ENCODE measurements at regions of chr15 and their contacts with region 1.

Region 1: DNA sequence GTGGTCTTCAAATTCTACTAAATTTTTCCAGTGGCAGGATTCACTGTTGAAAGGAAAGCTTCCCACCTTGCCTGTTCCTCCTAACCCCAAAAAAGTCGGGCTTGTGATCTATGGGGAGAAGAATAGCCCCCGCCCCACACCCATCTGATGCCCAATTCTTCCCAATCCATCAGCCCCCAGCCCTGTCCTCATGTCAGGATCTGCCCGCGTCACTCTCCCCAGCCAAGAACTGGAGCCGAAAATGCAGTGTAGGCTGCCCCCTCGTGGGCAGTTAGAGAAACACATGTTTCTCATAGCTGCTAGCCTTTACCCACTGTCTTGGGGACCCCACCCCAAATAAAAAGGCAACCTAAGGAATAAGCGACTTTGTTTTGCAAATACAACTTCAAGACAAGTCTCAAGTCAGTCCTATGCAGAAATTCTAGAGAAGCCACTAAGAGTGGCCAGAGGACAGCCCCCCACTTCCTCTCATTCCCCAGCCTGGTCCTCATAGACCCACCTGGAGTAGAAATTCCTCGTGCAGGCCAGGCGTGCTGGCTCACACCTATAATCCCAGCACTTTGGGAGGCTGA is 13.0 kb upstream of the CSK start:
- DNase-seq: peak; percentile 80
- H3K4me3 Mint-ChIP-seq: no peak overlapping the region
- H3K27ac Mint-ChIP-seq: no peak overlapping the region
- H3K4me1 Mint-ChIP-seq: peaks cover 21% of the 10 kb centered on the region
- H3K27me3 Mint-ChIP-seq: peaks cover 5% of the 10 kb centered on the region

Region 2: DNA sequence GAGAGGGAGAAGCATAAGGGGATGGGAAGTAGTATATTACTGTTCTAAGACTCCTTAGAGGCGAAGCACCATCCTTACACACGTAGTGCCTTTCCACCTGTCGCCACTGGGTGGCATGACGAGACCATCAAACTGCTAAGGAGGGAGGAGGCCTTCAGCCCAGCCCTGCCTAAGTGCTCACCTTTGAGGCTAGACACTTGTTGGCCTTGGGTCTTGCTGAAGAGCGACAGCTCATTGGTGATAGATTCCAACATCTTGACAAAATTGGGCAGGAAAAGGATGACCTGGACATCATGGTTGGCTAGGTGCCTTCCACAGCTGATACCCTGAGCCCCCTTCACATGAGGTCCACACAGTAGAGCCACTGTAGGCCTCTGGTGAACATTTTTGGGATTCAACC is 133.6 kb before region 1 on chr15:
- CTCF ChIA-PET with region 1: interaction called, 434 read pairs
- POLR2A ChIA-PET with region 1: no interaction called
- intact Hi-C with region 1: loop called (anchors 1 kb)
- DNase-seq: peak; percentile 84
- H3K4me3 Mint-ChIP-seq: no peak overlapping the region
- H3K27ac Mint-ChIP-seq: no peak overlapping the region
- H3K4me1 Mint-ChIP-seq: no peaks in the 10 kb centered on the region
- H3K27me3 Mint-ChIP-seq: no peaks in the 10 kb centered on the region

Region 3: GRCh38 chr15:74754593-74755215 is 14.2 kb before region 1 on chr15:
- CTCF ChIA-PET with region 1: interaction called, 35 read pairs
- POLR2A ChIA-PET with region 1: no interaction called
- intact Hi-C with region 1: no loop called
- DNase-seq: no peak
- H3K4me3 Mint-ChIP-seq: no peak overlapping the region
- H3K27ac Mint-ChIP-seq: no peak overlapping the region
- H3K4me1 Mint-ChIP-seq: no peaks in the 10 kb centered on the region
- H3K27me3 Mint-ChIP-seq: peaks cover 2% of the 10 kb centered on the region

Region 4: DNA sequence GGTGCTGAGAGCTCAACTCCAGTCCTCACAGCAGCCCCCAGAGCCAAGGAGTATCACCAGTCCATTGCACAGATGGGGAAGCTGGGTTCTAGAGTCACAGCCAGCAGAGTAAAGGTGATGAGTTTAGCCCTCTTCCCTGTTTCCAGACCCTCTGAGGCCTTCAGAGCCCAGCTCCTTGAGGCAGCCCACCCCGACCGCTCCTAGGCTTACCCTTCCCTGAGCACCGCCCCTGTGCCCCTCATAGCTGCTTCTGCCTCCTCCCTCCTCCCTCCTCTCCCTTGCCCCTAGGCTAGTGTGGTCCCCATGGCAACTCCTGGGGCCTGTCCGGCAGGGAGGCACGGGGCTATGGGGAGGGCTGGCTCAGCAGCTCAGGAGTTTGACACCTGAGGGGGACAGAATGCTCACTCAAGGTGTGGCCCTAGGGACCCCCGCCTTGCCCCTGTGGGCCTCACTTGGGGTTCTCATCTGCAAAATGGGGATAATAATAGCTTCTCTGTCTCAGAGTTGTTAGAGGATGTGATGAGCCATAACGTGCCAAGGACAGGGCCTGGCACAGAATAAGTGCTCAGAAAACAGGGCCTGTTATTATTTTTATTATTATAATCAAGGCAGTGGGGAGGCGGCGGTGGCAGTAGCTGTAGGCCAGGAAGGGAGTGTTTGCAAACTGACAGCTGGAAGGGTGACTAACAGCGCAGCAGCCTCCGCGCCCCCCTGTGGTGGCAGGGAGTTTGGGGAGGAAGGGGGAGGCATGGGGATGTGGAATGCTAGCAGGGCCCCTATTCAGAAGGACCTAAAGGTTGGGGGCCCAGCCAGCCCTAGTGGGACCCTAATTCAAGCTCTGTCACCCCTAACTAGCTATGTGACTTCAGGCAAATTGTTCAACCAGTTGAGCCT is 24.5 kb after region 1 on chr15:
- CTCF ChIA-PET with region 1: interaction called, 1,220 read pairs
- POLR2A ChIA-PET with region 1: interaction called, 13 read pairs
- intact Hi-C with region 1: no loop called
- DNase-seq: peak; percentile 81
- H3K4me3 Mint-ChIP-seq: peak overlapping the region; percentile 29
- H3K27ac Mint-ChIP-seq: peak overlapping the region; percentile 99
- H3K4me1 Mint-ChIP-seq: peaks cover 88% of the 10 kb centered on the region
- H3K27me3 Mint-ChIP-seq: no peaks in the 10 kb centered on the region

Region 5: DNA sequence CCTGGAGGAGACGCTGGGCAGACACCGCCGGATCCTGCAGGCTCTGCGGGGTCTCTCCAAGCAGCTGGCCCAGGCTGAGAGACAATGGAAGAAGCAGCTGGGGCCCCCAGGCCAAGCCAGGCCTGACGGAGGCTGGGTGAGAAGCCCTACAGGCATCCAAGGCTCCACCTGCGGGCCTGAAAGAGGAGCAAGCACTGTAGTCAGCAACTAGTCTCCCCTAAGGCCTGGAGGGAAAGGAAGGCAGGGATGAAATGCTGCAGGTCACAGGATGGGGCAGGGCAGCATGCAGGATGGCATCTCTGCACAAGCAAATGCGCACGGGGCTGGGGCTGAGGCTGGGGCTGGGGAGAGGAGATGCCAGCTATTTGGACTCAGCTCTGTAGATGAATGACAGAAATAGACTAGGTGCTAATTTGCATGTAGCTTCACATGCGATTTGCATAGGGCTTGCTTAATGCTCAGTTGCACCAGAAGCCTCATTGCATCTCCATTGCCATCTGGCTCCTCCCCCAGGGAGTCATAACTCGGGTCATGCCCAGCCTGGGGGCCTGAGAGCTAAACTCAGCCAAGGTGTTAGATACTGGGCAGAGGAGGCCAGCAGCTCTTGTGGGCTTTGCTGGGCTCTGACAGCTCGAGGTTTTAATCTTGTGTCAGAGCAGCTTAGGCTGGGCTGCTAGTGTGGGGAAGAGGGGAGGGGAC is 52.4 kb after region 1 on chr15:
- CTCF ChIA-PET with region 1: interaction called, 14 read pairs
- POLR2A ChIA-PET with region 1: no interaction called
- intact Hi-C with region 1: no loop called
- DNase-seq: no peak
- H3K4me3 Mint-ChIP-seq: no peak overlapping the region
- H3K27ac Mint-ChIP-seq: no peak overlapping the region
- H3K4me1 Mint-ChIP-seq: peaks cover 7% of the 10 kb centered on the region
- H3K27me3 Mint-ChIP-seq: no peaks in the 10 kb centered on the region

Region 6: DNA sequence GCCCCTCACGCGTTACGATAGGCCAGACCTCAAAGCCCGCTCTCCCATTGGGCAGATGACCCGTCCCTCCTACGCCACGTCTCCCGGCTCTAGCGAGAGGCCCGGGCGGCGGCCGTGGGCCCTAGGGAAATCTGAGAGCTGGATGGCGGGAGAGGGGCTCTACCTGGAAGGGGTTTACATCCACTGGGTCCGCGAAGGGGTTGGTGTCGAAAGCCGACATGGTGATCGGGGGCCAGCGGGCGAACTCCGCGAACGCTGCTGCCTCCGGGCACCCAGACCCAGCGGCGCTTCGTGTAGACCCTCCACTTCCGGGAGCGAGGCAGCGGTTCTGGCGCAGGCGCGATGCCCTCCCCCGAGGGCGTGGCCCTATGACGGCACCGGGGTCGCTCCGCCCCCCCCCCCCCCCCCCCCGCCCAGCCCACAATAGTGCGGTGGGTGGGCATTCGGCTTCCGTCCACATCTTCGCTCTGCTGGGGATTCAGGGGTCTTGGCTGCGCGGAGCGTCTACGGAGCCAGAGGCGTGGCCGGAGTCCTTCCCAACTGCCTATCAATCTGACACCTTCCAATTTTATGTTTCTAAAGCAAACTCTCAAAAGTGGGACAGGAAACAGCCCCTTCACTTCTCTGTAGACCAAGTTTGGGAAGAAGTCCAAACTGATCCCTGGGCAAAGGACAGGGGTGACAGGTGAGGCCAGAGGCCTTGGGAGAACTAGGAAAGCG is 104.3 kb after region 1 on chr15 and contains the start of gene SCAMP2:
- CTCF ChIA-PET with region 1: interaction called, 20 read pairs
- POLR2A ChIA-PET with region 1: no interaction called
- intact Hi-C with region 1: no loop called
- DNase-seq: peak; percentile 93
- H3K4me3 Mint-ChIP-seq: peak within 1 kb of the TSS; percentile 96
- H3K27ac Mint-ChIP-seq: peak within 1 kb of the TSS; percentile 90
- H3K4me1 Mint-ChIP-seq: peaks cover 45% of the 10 kb centered on the region
- H3K27me3 Mint-ChIP-seq: no peaks in the 10 kb centered on the region
- total RNA-seq, gene SCAMP2: 77.6 to 79.5 TPM

Region 7: GRCh38 chr15:75008629-75009326 is 239.9 kb after region 1 on chr15:
- CTCF ChIA-PET with region 1: no interaction called
- POLR2A ChIA-PET with region 1: no interaction called
- intact Hi-C with region 1: no loop called
- DNase-seq: no peak
- H3K4me3 Mint-ChIP-seq: no peak overlapping the region
- H3K27ac Mint-ChIP-seq: no peak overlapping the region
- H3K4me1 Mint-ChIP-seq: peaks cover 2% of the 10 kb centered on the region
- H3K27me3 Mint-ChIP-seq: peaks cover 5% of the 10 kb centered on the region